ENCODE measurements at regions of chr15 and their contacts with region 1.

Region 1: GRCh38 chr15:64586259-64586870 is 126.0 kb downstream of the ZNF609 start:
- DNase-seq: no peak
- H3K4me3 ChIP-seq: no peak overlapping the region
- H3K27ac ChIP-seq: no peak overlapping the region
- H3K4me1 ChIP-seq: no peaks in the 10 kb centered on the region
- H3K27me3 ChIP-seq: no peaks in the 10 kb centered on the region
- CTCF ChIP-seq: no peak

Region 2: DNA sequence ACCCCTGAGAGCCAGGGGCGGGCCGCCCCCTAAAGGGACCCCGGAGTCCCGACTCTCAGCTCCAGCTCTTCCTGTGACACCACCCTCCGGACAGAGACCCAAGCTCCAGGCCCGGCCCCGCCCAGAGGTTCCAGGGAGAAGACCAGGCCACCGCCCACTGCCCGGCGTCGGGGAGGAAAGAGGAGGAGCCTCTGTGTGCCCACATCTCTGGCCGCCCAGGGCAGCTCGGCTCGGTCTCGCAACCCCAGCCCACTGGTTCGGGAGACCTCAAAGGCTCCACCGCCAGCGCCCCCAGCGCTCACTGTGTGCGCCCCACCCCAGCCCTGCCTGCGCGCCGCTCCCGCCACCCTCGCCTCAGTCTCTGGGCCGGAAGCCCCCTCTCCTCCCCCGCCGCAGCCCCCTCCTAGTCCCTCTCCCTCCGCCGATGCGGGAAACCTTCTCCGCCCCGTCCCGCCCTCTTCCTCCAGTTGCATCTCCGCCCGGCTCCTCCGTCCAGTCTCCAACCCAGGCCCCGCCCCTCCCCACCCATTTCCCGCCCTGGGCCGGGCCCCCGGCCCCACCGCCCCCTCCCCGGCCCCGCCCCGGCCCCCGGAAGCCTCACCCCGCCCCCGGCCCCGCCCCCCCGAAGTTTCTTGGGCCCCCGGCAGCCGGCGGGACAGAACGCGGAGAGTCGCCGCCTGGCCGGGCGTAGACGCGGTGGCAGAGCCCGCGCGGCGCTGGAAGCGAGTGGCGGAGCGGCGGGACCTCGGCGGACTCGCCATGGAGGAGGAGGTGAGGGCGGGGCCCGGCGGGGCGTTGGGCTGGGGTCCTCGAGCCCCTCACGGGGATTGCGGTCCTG is 255.1 kb after region 1 on chr15 and contains the start of gene PLEKHO2:
- CTCF ChIA-PET with region 1: no interaction called
- POLR2A ChIA-PET with region 1: no interaction called
- intact Hi-C with region 1: no loop called
- DNase-seq: peak; percentile 71 to 92
- H3K4me3 ChIP-seq: peak within 1 kb of the TSS; percentile 61
- H3K27ac ChIP-seq: no peak within 1 kb of the TSS
- H3K4me1 ChIP-seq: no peaks in the 10 kb centered on the region
- H3K27me3 ChIP-seq: no peaks in the 10 kb centered on the region
- CTCF ChIP-seq: no peak
- total RNA-seq, gene PLEKHO2: 7.5 and 7.9 TPM in 2 replicates

Region 3: GRCh38 chr15:66558300-66558699 is 1971.9 kb after region 1 on chr15:
- CTCF ChIA-PET with region 1: interaction called, 10 read pairs
- POLR2A ChIA-PET with region 1: no interaction called
- intact Hi-C with region 1: no loop called
- DNase-seq: no peak
- H3K4me3 ChIP-seq: no peak overlapping the region
- H3K27ac ChIP-seq: no peak overlapping the region
- H3K4me1 ChIP-seq: no peaks in the 10 kb centered on the region
- H3K27me3 ChIP-seq: no peaks in the 10 kb centered on the region
- CTCF ChIP-seq: no peak

Measured in PC-9 (cell line).